Activated T-helper 1 cell treated with anti-CD3 and anti-CD28 coated beads, Interleukin-12 subunit alpha, Interleukin-12 subunit beta, Interleukin-2, Interleukin-4 antibody, amounts not matched to agents 30 ng/mL and 10 ng/mL and 1 ng/mL, durations not matched to agents 14 hours and 24 hours and 36 hours (primary cell): ENCODE measurements at regions of chr18 and their contacts with region 1.

Region 1: DNA sequence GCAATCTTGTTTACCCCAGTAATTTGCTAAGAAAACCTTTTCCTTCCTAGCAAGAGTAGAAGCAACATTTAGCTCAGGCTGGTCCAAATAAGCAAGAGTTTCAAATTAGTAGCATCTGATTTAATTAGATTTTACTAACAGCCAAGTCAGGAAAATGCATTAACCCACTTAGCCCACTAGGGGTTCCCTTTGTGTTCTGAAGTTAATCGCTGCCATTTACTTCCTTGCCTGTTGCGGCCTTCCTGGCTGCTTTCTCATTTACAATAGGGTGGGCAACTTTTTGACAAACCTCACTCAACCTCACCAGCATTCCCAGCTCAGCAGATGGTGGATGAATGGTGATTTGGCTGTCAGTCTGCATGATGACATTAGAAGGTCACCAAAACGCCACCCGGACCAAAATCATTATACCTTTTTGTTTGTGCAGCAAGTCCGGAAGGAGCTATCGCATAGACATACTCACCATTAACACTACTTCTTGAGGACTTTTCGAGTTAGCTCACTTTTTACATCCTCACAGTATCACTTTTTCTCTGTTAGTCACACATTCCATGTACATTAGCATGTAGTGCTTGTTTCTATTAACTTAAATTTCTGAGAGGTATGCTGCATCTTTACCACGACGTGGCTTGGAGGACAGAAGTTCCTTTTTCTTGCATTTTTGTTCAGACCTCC is 101.5 kb upstream of the SETBP1 start:
- DNase-seq: no peak
- H3K4me3 Mint-ChIP-seq: no peak overlapping the region
- H3K27ac Mint-ChIP-seq: no peak overlapping the region
- H3K4me1 Mint-ChIP-seq: no peaks in the 10 kb centered on the region
- H3K27me3 Mint-ChIP-seq: peaks cover 3% of the 10 kb centered on the region

Region 2: DNA sequence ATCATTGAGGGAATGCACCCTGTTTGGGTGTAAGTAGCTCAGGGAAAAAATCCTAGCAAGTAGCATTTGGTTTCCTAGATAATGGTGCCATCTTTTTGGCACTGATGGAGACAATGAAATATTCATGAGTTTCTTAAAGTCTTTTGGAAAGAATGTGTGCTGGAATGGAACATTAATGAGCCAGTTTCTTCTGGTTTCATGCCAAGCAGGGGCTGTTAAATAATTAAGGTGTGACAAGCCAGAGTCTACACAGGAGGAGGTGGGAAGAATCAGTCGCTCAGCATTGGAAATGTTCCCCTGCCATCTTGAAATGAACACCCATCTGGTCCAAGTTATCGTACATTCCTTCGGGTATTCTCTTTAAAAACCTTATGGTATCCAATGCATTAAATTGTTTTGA is 1921.0 kb before region 1 on chr18:
- intact Hi-C with region 1: no loop called
- DNase-seq: no peak
- H3K4me3 Mint-ChIP-seq: no peak overlapping the region
- H3K27ac Mint-ChIP-seq: no peak overlapping the region
- H3K4me1 Mint-ChIP-seq: no peaks in the 10 kb centered on the region
- H3K27me3 Mint-ChIP-seq: no peaks in the 10 kb centered on the region

Region 3: GRCh38 chr18:44627280-44627679 is 48.1 kb after region 1 on chr18:
- intact Hi-C with region 1: no loop called
- DNase-seq: no peak
- H3K4me3 Mint-ChIP-seq: no peak overlapping the region
- H3K27ac Mint-ChIP-seq: peak overlapping the region; percentile 45
- H3K4me1 Mint-ChIP-seq: peaks cover 7% of the 10 kb centered on the region
- H3K27me3 Mint-ChIP-seq: peaks cover 12% of the 10 kb centered on the region

Region 4: DNA sequence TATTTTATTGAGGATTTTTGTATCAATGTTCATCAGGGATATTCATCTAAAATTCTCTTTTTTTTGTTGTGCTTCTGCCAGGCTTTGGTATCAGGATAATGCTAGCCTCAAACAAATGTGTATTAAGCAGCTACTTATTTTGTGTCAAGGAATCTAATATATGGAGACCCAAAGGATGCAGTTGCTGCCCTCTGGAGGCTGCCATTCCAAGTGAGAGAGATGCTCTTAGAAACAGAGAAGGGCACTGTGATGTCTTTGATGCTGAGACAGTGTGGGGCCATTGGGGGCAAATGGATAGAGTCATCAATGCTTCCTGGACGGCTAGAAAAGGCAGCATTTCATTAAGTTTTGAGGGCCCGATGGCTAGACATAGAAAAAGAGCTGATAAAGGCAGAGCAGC is 394.1 kb after region 1 on chr18:
- intact Hi-C with region 1: loop called (anchors 10 kb)
- DNase-seq: no peak
- H3K4me3 Mint-ChIP-seq: no peak overlapping the region
- H3K27ac Mint-ChIP-seq: no peak overlapping the region
- H3K4me1 Mint-ChIP-seq: no peaks in the 10 kb centered on the region
- H3K27me3 Mint-ChIP-seq: no peaks in the 10 kb centered on the region